ENCODE measurements at regions of chr11 and their contacts with region 1.

Region 1: GRCh38 chr11:125887373-125888324 is at the start of gene HYLS1:
- DNase-seq: peak; percentile 96
- total RNA-seq, gene HYLS1: 2.3 TPM

Region 2: GRCh38 chr11:125902927-125903710 is 15.5 kb after region 1 on chr11 and contains the start of gene PUS3:
- intact Hi-C with region 1: loop called (anchors 2 kb)
- DNase-seq: peak; percentile 94
- total RNA-seq, gene PUS3: 7.1 TPM